ENCODE measurements at regions of chr4 and their contacts with region 1.

Region 1: GRCh38 chr4:147586637-147587036 is 30.6 kb upstream of the TMEM184C start:
- DNase-seq: no peak
- H3K4me3 ChIP-seq: no peak overlapping the region
- H3K27ac ChIP-seq: no peak overlapping the region
- H3K4me1 ChIP-seq: peaks cover 0 to 21% (median 8%) of the 10 kb centered on the region in 4 donors
- H3K27me3 ChIP-seq: no peaks in the 10 kb centered on the region
- CTCF ChIP-seq: no peak
- EP300 ChIP-seq: no peak
- POLR2A ChIP-seq: no peak

Region 2: DNA sequence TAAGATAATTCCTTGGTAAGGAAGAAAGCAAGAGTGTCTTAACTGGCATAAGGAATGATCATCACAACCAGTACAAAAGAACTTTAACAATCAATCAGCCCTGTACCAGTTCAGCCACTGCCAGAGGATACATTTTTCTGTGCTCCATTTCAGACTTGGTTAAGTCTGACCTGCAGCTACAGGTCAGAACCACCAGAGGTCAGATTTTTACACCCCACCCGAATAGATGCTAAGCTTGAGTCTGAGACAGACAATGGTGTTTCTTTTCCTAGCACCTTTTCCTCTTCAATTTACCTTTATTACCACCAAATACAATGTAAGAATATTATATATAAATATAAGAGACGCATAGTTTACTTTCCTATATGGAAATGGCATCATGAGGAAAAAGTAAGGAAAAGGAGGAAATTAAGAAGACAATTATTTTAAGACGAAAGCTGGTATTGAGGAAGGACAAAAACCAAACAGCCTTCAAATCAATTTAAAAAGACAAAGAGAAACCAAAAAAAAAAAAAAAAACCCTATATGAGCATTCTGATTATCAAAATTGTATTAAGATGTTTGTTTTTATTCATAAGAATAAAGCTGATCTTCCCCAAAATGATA is 425.6 kb before region 1 on chr4:
- intact Hi-C with region 1: loop called (anchors 10 kb)
- DNase-seq: peak in 1 of 2 donors; percentile 76
- H3K4me3 ChIP-seq: no peak overlapping the region
- H3K27ac ChIP-seq: no peak overlapping the region
- H3K4me1 ChIP-seq: peaks cover 0 to 17% (median 12%) of the 10 kb centered on the region in 4 donors
- H3K27me3 ChIP-seq: no peaks in the 10 kb centered on the region
- CTCF ChIP-seq: peak in 5 of 7 experiments; percentile 32 to 64 (median 52)
- EP300 ChIP-seq: no peak
- POLR2A ChIP-seq: no peak

Region 3: GRCh38 chr4:147312376-147313046 is 274.1 kb before region 1 on chr4:
- intact Hi-C with region 1: no loop called
- DNase-seq: peak in 1 of 2 donors; percentile 52
- H3K4me3 ChIP-seq: no peak overlapping the region
- H3K27ac ChIP-seq: no peak overlapping the region
- H3K4me1 ChIP-seq: no peaks in the 10 kb centered on the region
- H3K27me3 ChIP-seq: no peaks in the 10 kb centered on the region
- CTCF ChIP-seq: no peak
- EP300 ChIP-seq: no peak
- POLR2A ChIP-seq: no peak

Region 4: DNA sequence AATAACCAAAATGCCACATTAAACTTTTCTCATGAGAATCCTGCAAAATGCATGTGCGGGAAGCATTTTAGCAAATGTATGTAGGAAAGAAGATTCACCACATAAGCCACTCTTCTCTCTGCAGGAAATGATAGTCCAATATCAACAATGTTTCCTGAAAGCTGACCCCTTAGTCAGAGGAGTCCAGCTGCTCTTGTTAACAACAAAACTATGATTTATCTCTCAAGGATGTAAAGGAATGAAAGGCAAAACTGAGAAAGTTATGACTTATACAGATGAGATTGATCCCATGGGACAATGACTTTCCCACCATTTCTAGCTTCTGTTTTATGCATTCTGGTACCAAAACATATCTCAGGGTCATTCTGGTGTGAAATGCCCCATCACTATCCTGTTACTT is 230.8 kb before region 1 on chr4:
- intact Hi-C with region 1: no loop called
- DNase-seq: no peak
- H3K4me3 ChIP-seq: no peak overlapping the region
- H3K27ac ChIP-seq: no peak overlapping the region
- H3K4me1 ChIP-seq: peaks cover 0 to 7% (median 2%) of the 10 kb centered on the region in 4 donors
- H3K27me3 ChIP-seq: no peaks in the 10 kb centered on the region
- CTCF ChIP-seq: no peak
- EP300 ChIP-seq: no peak
- POLR2A ChIP-seq: no peak

Region 5: GRCh38 chr4:147530723-147531122 is 55.9 kb before region 1 on chr4:
- intact Hi-C with region 1: no loop called
- DNase-seq: no peak
- H3K4me3 ChIP-seq: no peak overlapping the region
- H3K27ac ChIP-seq: no peak overlapping the region
- H3K4me1 ChIP-seq: peaks cover 0 to under 1% (median 0%) of the 10 kb centered on the region in 4 donors
- H3K27me3 ChIP-seq: no peaks in the 10 kb centered on the region
- CTCF ChIP-seq: no peak
- EP300 ChIP-seq: no peak
- POLR2A ChIP-seq: no peak

Region 6: GRCh38 chr4:147542229-147542990 is 44.2 kb before region 1 on chr4:
- intact Hi-C with region 1: no loop called
- DNase-seq: no peak
- H3K4me3 ChIP-seq: no peak overlapping the region
- H3K27ac ChIP-seq: no peak overlapping the region
- H3K4me1 ChIP-seq: no peaks in the 10 kb centered on the region
- H3K27me3 ChIP-seq: no peaks in the 10 kb centered on the region
- CTCF ChIP-seq: no peak
- EP300 ChIP-seq: no peak
- POLR2A ChIP-seq: no peak

Measured in stomach (tissue), 19 donors.